ENCODE measurements at regions of chr19 and their contacts with region 1.

Region 1: GRCh38 chr19:53906211-53907192 is 2.6 kb upstream of the CACNG7 start:
- DNase-seq: no peak
- H3K4me3 ChIP-seq: no peak overlapping the region
- CTCF ChIP-seq: no peak
- POLR2A ChIP-seq: no peak

Region 2: DNA sequence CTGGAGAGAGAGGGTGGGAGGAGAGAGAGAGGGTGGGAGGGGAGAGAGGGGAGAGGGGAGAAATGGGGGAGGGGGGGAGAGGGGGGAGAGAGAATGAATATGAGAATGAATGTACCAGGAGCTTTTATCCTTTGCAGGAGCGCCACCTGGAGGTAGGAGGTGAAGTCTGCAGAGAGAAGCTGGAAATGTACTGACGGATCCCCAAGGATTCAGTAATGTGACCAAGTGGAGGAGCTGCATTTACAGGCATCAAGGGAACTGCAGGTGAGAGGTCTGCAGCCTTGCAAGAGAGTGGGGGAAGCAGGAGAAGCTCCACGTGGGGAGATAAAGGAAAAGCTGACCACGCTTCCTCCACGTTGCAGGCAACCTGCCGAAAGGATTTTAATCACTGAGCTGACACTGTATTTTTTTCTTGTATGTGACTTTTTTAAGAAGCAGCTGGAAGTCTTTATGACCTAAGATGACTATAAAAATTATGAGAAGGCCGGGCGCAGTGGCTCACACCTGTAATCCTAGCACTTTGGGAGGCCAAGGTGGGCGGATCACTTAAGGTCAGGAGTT is 123.5 kb after region 1 on chr19:
- intact Hi-C with region 1: loop called (anchors 10 kb)
- DNase-seq: peak in 1 of 2 donors; percentile 43
- H3K4me3 ChIP-seq: no peak overlapping the region
- CTCF ChIP-seq: no peak
- POLR2A ChIP-seq: no peak